ENCODE measurements at regions of chr3 and their contacts with region 1.

Region 1: GRCh38 chr3:13657660-13658435 is 108.9 kb downstream of the FBLN2 start:
- DNase-seq: peak; percentile 92
- H3K4me3 ChIP-seq: peak overlapping the region in 1 of 2 experiments; percentile 26; a peak in 1 of 4 replicates
- H3K27ac ChIP-seq: no peak overlapping the region
- H3K4me1 ChIP-seq: peaks cover 0 to 9% of the 10 kb centered on the region in 2 experiments; a peak in 1 of 4 replicates
- H3K27me3 ChIP-seq: no peaks in the 10 kb centered on the region
- CTCF ChIP-seq: peak; percentile 73
- EP300 ChIP-seq: no peak
- RAD21 ChIP-seq: peak; percentile 85

Region 2: DNA sequence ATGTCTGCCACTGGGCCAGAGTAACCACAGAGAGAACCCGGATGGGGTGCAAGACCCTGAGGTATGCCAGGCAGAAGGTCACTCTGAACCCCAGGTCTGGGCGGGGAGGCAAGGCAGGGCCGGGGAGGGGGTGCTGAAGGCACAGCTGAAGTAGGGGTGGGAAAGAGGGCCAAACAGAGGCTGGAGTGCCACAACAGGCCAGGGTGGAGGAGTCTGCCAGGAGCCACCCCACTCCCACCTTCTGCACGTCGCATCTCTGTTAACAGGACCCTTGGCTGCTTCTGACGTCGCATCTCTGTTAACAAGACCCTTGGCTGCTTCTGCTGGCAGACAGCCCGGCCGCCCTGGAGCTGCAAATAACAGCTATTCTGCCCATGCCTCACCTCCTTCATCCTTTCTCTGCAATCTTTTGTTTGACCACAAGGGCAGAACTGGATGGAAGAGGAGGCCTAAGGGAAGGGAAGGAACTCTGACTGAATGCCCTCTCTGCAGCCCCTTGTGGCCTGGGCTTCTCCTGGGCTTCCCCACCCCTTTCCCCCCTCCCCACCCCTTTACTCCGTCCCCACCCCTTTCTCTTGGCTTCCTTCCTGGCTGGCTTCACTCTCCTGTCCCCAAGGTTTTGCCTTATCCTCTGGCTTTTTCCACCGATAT is 129.5 kb before region 1 on chr3:
- CTCF ChIA-PET with region 1: no interaction called
- POLR2A ChIA-PET with region 1: no interaction called
- DNase-seq: peak; percentile 72
- H3K4me3 ChIP-seq: no peak overlapping the region
- H3K27ac ChIP-seq: no peak overlapping the region
- H3K4me1 ChIP-seq: peaks cover 0 to 21% of the 10 kb centered on the region in 2 experiments; a peak in 3 of 4 replicates
- H3K27me3 ChIP-seq: no peaks in the 10 kb centered on the region
- CTCF ChIP-seq: peak; percentile 28
- EP300 ChIP-seq: no peak
- RAD21 ChIP-seq: no peak

Region 3: DNA sequence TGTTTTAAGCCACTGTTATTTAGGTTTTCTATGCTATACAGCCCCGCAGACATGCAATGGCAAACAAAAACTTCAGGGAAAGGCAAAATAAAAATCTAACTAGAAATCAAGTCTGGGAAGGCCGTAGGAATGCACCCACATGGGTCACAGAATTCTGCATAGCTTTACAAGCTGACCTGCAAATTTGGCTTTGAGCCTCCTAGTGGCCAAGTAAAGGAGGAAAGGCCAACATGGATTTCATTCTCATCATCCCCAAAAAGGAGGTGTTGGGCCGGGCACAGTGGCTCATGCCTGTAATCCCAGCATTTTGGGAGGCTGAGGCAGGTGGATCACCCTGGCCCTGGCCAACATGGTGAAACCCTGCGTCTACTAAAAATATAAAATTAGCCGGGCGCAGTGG is 15.4 kb after region 1 on chr3:
- CTCF ChIA-PET with region 1: interaction called, 69 read pairs
- POLR2A ChIA-PET with region 1: no interaction called
- DNase-seq: no peak
- H3K4me3 ChIP-seq: no peak overlapping the region
- H3K27ac ChIP-seq: no peak overlapping the region
- H3K4me1 ChIP-seq: no peaks in the 10 kb centered on the region
- H3K27me3 ChIP-seq: no peaks in the 10 kb centered on the region
- CTCF ChIP-seq: peak; percentile 34
- EP300 ChIP-seq: no peak
- RAD21 ChIP-seq: no peak

Region 4: GRCh38 chr3:13687517-13687943 is 29.7 kb after region 1 on chr3:
- CTCF ChIA-PET with region 1: interaction called, 48 read pairs
- POLR2A ChIA-PET with region 1: no interaction called
- DNase-seq: no peak
- H3K4me3 ChIP-seq: no peak overlapping the region
- H3K27ac ChIP-seq: no peak overlapping the region
- H3K4me1 ChIP-seq: peaks cover 0 to 18% of the 10 kb centered on the region in 2 experiments; a peak in 1 of 4 replicates
- H3K27me3 ChIP-seq: no peaks in the 10 kb centered on the region
- CTCF ChIP-seq: no peak
- EP300 ChIP-seq: no peak
- RAD21 ChIP-seq: no peak

Region 5: DNA sequence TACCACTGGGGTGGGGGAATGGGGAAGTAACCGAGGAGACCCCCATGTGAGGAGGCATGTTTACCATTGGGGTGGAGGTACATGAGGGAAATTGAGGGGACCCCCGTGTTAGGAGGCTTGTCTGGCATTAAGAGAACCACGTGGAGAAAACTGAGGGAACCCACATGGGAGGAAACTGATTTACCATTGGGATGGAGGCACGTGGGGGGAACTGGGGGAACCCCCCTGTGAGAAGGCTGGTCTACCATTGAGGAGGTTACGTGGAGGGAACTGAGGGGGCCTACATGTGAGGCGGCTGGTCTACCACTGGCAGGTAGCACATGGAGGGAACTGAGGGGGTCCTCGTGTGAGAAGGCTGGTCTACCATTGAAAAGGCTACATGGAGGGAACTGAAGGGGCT is 50.5 kb after region 1 on chr3:
- CTCF ChIA-PET with region 1: no interaction called
- POLR2A ChIA-PET with region 1: no interaction called
- DNase-seq: no peak
- H3K4me3 ChIP-seq: no peak overlapping the region
- H3K27ac ChIP-seq: no peak overlapping the region
- H3K4me1 ChIP-seq: no peaks in the 10 kb centered on the region
- H3K27me3 ChIP-seq: no peaks in the 10 kb centered on the region
- CTCF ChIP-seq: no peak
- EP300 ChIP-seq: no peak
- RAD21 ChIP-seq: no peak

Region 6: DNA sequence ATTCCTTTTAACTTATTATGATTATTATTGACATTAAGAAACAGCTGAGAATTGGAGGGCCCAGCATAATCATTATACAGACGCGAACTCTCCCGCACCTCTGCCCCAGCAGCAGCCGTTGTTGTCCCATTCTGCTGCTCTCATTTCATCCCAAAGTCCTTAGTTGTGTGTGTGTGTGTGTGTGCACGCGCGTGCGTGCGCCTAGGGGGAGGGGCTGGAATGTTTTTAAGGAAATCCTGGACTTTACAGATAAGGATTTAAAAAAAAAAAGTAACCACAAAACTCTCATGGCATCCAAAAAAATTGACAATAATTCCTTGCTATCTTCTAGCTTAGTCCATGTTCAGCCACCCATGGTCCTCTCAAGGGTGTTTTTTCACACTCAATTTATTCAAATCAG is 87.8 kb after region 1 on chr3:
- CTCF ChIA-PET with region 1: interaction called, 12 read pairs
- POLR2A ChIA-PET with region 1: no interaction called
- DNase-seq: no peak
- H3K4me3 ChIP-seq: no peak overlapping the region
- H3K27ac ChIP-seq: peak overlapping the region in 1 of 2 experiments; percentile 84; a peak in 2 of 4 replicates
- H3K4me1 ChIP-seq: peaks cover 0 to 18% of the 10 kb centered on the region in 2 experiments; a peak in 2 of 4 replicates
- H3K27me3 ChIP-seq: no peaks in the 10 kb centered on the region
- CTCF ChIP-seq: no peak
- EP300 ChIP-seq: no peak
- RAD21 ChIP-seq: no peak

Region 7: GRCh38 chr3:13866041-13866965 is 208.5 kb after region 1 on chr3:
- CTCF ChIA-PET with region 1: interaction called, 21 read pairs
- POLR2A ChIA-PET with region 1: no interaction called
- DNase-seq: no peak
- H3K4me3 ChIP-seq: no peak overlapping the region
- H3K27ac ChIP-seq: no peak overlapping the region
- H3K4me1 ChIP-seq: peaks cover 0 to 5% of the 10 kb centered on the region in 2 experiments; a peak in 1 of 4 replicates
- H3K27me3 ChIP-seq: no peaks in the 10 kb centered on the region
- CTCF ChIP-seq: no peak
- EP300 ChIP-seq: no peak
- RAD21 ChIP-seq: no peak